ENCODE measurements at regions of chrX and their contacts with region 1.

Region 1: GRCh38 chrX:50470103-50471031 is at the start of gene DGKK:
- DNase-seq: no peak
- ATAC-seq: no peak
- H3K4me3 ChIP-seq: no peak within 1 kb of the TSS
- H3K27ac ChIP-seq: no peak within 1 kb of the TSS
- H3K4me1 ChIP-seq: no peaks in the 10 kb centered on the region
- H3K27me3 ChIP-seq: peaks cover 12% of the 10 kb centered on the region; the same call in 1 of the 2 replicates
- CTCF ChIP-seq: no peak
- POLR2A ChIP-seq: no peak
- RAD21 ChIP-seq: no peak
- total RNA-seq, gene DGKK: not detected

Region 2: DNA sequence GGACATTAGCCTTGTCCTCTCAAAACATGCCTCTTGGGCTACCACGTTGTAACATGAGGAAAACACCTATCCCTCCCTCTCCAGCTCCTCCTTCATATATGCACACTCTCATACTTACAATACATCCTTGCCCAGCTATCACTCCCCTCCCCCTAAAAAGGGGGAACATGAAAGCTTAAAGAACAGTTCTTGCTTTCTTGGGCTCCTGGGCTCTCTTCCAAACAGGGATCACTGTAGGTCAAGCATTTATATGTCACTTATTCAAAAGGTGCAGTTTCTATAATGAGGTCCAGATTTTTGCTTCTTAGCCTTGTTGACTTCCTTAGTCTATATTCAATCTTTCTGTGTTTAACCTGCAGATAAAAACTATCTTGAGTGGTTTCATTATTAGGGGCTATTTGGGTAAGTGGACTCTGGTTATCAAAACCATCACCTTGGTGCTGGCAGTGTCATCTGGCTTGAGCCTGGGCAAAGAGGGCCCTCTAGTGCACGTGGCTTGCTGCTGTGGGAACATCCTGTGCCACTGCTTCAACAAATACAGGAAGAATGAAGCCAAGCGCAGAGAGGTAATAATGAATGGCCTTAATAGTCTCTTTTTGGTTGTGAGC is 389.0 kb before region 1 on chrX:
- CTCF ChIA-PET with region 1: no interaction called
- POLR2A ChIA-PET with region 1: no interaction called
- RAD21 ChIA-PET with region 1: no interaction called
- intact Hi-C with region 1: no loop called
- DNase-seq: no peak
- ATAC-seq: peak; percentile 55; the same call in 1 of the 2 replicates
- H3K4me3 ChIP-seq: no peak overlapping the region
- H3K27ac ChIP-seq: no peak overlapping the region
- H3K4me1 ChIP-seq: no peaks in the 10 kb centered on the region
- H3K27me3 ChIP-seq: no peaks in the 10 kb centered on the region
- CTCF ChIP-seq: peak; percentile 43 to 46 (median 46); a peak in 4 of 6 replicates
- POLR2A ChIP-seq: no peak
- RAD21 ChIP-seq: peak; percentile 67

Region 3: DNA sequence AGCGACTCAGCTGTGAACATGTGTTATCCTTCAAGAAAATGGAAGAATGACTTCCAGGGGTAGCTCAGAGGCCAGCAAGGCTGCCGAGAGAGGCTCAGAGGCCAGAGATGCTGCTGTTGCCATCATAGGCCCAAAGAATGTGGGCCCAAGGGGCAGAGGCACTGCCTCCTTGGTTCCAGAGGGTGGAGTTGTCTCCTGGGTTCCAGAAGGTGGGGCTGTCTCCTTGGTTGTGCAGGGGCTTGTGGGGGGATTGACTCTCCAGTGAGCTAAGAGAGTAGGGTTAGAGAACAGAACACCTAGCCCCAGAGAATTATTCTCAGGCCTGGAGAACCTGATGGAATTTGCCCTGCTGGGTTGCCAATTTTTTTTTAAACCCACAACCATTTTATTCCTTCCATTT is 62.4 kb before region 1 on chrX:
- CTCF ChIA-PET with region 1: no interaction called
- POLR2A ChIA-PET with region 1: no interaction called
- RAD21 ChIA-PET with region 1: no interaction called
- intact Hi-C with region 1: loop called (anchors 10 kb)
- DNase-seq: no peak
- ATAC-seq: no peak
- H3K4me3 ChIP-seq: no peak overlapping the region
- H3K27ac ChIP-seq: no peak overlapping the region
- H3K4me1 ChIP-seq: no peaks in the 10 kb centered on the region
- H3K27me3 ChIP-seq: 0 out of 2 replicates have a peak, but pooled peaks cover 12% of the 10 kb centered on the region
- CTCF ChIP-seq: no peak
- POLR2A ChIP-seq: no peak
- RAD21 ChIP-seq: no peak

Region 4: GRCh38 chrX:50430917-50431575 is 39.3 kb before region 1 on chrX:
- CTCF ChIA-PET with region 1: no interaction called
- POLR2A ChIA-PET with region 1: no interaction called
- RAD21 ChIA-PET with region 1: no interaction called
- intact Hi-C with region 1: no loop called
- DNase-seq: no peak
- ATAC-seq: no peak
- H3K4me3 ChIP-seq: no peak overlapping the region
- H3K27ac ChIP-seq: no peak overlapping the region
- H3K4me1 ChIP-seq: no peaks in the 10 kb centered on the region
- H3K27me3 ChIP-seq: no peaks in the 10 kb centered on the region
- CTCF ChIP-seq: no peak
- POLR2A ChIP-seq: no peak
- RAD21 ChIP-seq: no peak

Measured in HCT116 (cell line).